Stomach (tissue), 19 donors: ENCODE measurements at regions of chr5 and their contacts with region 1.

Region 1: DNA sequence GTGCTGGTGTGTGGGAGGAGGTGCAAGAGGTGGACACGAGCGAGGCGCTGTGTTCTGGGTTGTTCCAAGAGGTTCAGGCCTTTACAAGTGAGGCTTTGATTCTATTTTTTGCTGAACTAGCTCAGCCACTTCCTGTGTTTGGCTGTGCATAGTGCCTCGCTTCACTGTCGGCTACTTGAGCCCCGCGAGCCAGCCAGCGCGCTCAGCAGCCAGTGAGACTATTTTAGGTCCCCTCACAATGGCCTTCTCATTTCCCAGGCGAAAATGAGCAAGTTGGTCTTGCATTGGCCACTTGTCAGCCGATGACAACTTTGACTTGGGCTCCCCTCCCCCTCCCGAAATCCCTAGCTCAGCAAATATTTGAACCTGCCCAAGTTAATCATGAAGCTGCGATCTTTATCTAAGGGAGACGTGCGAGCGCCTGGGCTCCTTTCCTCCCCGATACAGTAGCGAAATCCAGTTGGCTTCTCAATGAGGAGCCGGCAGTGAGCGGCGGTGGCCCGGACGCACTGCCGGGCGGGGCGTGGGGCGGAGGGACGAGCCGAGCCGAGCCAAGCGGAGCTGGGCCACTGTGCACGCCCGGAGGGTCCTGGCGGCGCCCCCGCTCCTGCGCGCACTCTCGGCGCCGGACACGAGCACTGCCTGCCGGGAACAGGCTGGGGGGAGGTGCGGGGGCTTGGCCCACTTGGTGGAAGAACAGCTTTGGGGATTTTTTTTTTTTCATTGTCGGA is 72.6 kb downstream of the PIK3R1 start:
- DNase-seq: peak; percentile 66 to 91
- H3K4me3 ChIP-seq: peak overlapping the region; percentile 46 to 61 (median 52)
- H3K27ac ChIP-seq: peak overlapping the region; percentile 83 to 95 (median 90)
- H3K4me1 ChIP-seq: peaks cover 57 to 94% (median 81%) of the 10 kb centered on the region in 4 donors
- H3K27me3 ChIP-seq: no peaks in the 10 kb centered on the region
- CTCF ChIP-seq: no peak
- EP300 ChIP-seq: no peak
- POLR2A ChIP-seq: no peak

Region 2: GRCh38 chr5:68460147-68460798 is 172.1 kb after region 1 on chr5:
- intact Hi-C with region 1: loop called (anchors 10 kb)
- DNase-seq: peak in 1 of 2 donors; percentile 83
- H3K4me3 ChIP-seq: no peak overlapping the region
- H3K27ac ChIP-seq: peak overlapping the region in 2 of 5 donors; percentile 23 to 46
- H3K4me1 ChIP-seq: peaks cover 17 to 46% (median 34%) of the 10 kb centered on the region in 4 donors
- H3K27me3 ChIP-seq: no peaks in the 10 kb centered on the region
- CTCF ChIP-seq: peak in 4 of 7 experiments; percentile 29 to 63 (median 50)
- EP300 ChIP-seq: no peak
- POLR2A ChIP-seq: no peak